ENCODE measurements at regions of chr1 and their contacts with region 1.

Region 1: DNA sequence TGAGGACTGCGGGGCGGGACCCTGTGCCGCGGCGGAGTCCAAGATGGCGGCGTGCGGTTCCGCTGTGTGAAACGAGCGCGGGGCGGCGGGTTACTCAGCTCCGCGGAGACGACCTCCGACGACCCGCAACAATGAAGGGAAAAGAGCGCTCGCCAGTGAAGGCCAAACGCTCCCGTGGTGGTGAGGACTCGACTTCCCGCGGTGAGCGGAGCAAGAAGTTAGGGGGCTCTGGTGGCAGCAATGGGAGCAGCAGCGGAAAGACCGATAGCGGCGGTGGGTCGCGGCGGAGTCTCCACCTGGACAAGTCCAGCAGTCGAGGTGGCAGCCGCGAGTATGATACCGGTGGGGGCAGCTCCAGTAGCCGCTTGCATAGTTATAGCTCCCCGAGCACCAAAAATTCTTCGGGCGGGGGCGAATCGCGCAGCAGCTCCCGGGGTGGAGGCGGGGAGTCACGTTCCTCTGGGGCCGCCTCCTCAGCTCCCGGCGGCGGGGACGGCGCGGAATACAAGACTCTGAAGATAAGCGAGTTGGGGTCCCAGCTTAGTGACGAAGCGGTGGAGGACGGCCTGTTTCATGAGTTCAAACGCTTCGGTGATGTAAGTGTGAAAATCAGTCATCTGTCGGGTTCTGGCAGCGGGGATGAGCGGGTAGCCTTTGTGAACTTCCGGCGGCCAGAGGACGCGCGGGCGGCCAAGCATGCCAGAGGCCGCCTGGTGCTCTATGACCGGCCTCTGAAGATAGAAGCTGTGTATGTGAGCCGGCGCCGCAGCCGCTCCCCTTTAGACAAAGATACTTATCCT is 430 bp downstream of the RBM15 start:
- DNase-seq: peak; percentile 66 to 81 (median 72)
- H3K4me3 ChIP-seq: peak overlapping the region; percentile 61 to 90 (median 70)
- H3K27ac ChIP-seq: peak overlapping the region; percentile 61 to 99 (median 98)
- H3K4me1 ChIP-seq: peaks cover 42 to 60% of the 10 kb centered on the region in 2 donors
- H3K27me3 ChIP-seq: no peaks in the 10 kb centered on the region
- CTCF ChIP-seq: peak in 5 of 6 experiments; percentile 41 to 86 (median 65)
- POLR2A ChIP-seq: peak; percentile 71 to 91

Region 2: GRCh38 chr1:110407260-110408210 is 67.9 kb after region 1 on chr1 and contains the start of gene LAMTOR5:
- intact Hi-C with region 1: loop called (anchors 10 kb)
- DNase-seq: peak; percentile 94 to 98 (median 95)
- H3K4me3 ChIP-seq: peak within 1 kb of the TSS; percentile 1 to 95 (median 53)
- H3K27ac ChIP-seq: peak within 1 kb of the TSS; percentile 15 to 98 (median 87)
- H3K4me1 ChIP-seq: peaks cover 0 to 20% of the 10 kb centered on the region in 2 donors
- H3K27me3 ChIP-seq: no peaks in the 10 kb centered on the region
- CTCF ChIP-seq: peak in 4 of 6 experiments; percentile 4 to 25 (median 10)
- POLR2A ChIP-seq: peak; percentile 35 to 82
- total RNA-seq, gene LAMTOR5: 81.3 to 152 (median 121) TPM

Measured in adrenal gland (tissue), 19 donors.